ENCODE measurements at regions of chr19 and their contacts with region 1.

Region 1: GRCh38 chr19:10936661-10937084 is 8.1 kb downstream of the TIMM29 start:
- DNase-seq: peak; percentile 75 to 80
- H3K4me3 ChIP-seq: no peak overlapping the region
- H3K4me3 Mint-ChIP-seq: peak overlapping the region; percentile 49
- H3K27ac Mint-ChIP-seq: peak overlapping the region; percentile 57
- H3K4me1 ChIP-seq: peaks cover 28% of the 10 kb centered on the region
- H3K4me1 Mint-ChIP-seq: peaks cover 7% of the 10 kb centered on the region
- H3K27me3 ChIP-seq: no peaks in the 10 kb centered on the region
- H3K27me3 Mint-ChIP-seq: no peaks in the 10 kb centered on the region
- CTCF ChIP-seq: peak; percentile 71 to 76

Region 2: DNA sequence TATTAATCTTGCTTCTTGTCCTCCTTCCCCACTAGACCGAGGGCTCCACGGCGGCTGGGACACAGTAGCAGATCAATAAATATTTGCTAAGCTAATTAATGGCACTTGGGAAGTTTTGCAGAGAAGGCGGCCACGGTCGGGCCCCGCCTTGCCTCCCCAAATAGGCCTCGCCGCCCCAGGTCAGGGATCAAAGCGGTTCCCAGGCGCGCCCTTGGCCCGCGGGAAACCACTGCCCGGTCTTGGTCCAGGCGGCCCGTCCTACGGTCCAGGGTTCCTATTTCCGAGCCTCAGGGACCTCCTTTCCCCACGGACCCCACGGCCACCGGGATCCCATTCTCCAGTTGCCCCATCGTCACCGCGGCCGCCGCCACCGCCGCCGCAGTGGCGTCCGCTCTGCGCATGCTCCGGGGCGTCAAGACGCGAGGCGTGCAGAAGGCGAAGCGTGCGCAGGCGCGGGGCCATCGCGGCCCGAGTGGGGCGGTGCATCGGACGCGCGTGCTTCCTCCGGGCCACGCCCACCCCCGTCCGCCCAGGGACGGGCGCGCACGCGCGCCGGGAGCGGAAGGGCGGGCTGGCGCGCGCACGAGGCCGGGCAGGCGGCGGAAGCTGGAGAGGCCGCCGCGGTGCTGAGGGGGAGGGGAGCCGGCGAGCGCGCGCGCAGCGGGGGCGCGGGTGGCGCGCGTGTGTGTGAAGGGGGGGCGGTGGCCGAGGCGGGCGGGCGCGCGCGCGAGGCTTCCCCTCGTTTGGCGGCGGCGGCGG is 23.8 kb after region 1 on chr19 and contains the start of gene SMARCA4:
- CTCF ChIA-PET with region 1: interaction called, 8 read pairs
- POLR2A ChIA-PET with region 1: interaction called, 7 read pairs
- intact Hi-C with region 1: loop called (anchors 2 kb)
- DNase-seq: peak; percentile 94 to 98
- H3K4me3 ChIP-seq: peak within 1 kb of the TSS; percentile 96
- H3K4me3 Mint-ChIP-seq: peak within 1 kb of the TSS; percentile 83
- H3K27ac Mint-ChIP-seq: peak within 1 kb of the TSS; percentile 91
- H3K4me1 ChIP-seq: peaks cover 9% of the 10 kb centered on the region; the same call in 1 of the 2 replicates
- H3K4me1 Mint-ChIP-seq: peaks cover 7% of the 10 kb centered on the region
- H3K27me3 ChIP-seq: no peaks in the 10 kb centered on the region
- H3K27me3 Mint-ChIP-seq: no peaks in the 10 kb centered on the region
- CTCF ChIP-seq: no peak
- total RNA-seq, gene SMARCA4: 171 and 180 TPM in 2 replicates

Region 3: GRCh38 chr19:11035441-11036377 is 99.0 kb after region 1 on chr19:
- CTCF ChIA-PET with region 1: interaction called, 11 read pairs
- POLR2A ChIA-PET with region 1: no interaction called
- intact Hi-C with region 1: no loop called
- DNase-seq: peak; percentile 84 to 86
- H3K4me3 ChIP-seq: no peak overlapping the region
- H3K4me3 Mint-ChIP-seq: no peak overlapping the region
- H3K27ac Mint-ChIP-seq: no peak overlapping the region
- H3K4me1 ChIP-seq: no peaks in the 10 kb centered on the region
- H3K4me1 Mint-ChIP-seq: no peaks in the 10 kb centered on the region
- H3K27me3 ChIP-seq: no peaks in the 10 kb centered on the region
- H3K27me3 Mint-ChIP-seq: no peaks in the 10 kb centered on the region
- CTCF ChIP-seq: peak; percentile 83 to 94

Region 4: GRCh38 chr19:11137542-11138384 is 201.1 kb after region 1 on chr19:
- CTCF ChIA-PET with region 1: no interaction called
- POLR2A ChIA-PET with region 1: no interaction called
- intact Hi-C with region 1: loop called (anchors 5 kb)
- DNase-seq: peak; percentile 77 to 79
- H3K4me3 ChIP-seq: peak overlapping the region; percentile 50
- H3K4me3 Mint-ChIP-seq: peak overlapping the region; percentile 66
- H3K27ac Mint-ChIP-seq: peak overlapping the region; percentile 7
- H3K4me1 ChIP-seq: peaks cover 19% of the 10 kb centered on the region
- H3K4me1 Mint-ChIP-seq: no peaks in the 10 kb centered on the region
- H3K27me3 ChIP-seq: no peaks in the 10 kb centered on the region
- H3K27me3 Mint-ChIP-seq: no peaks in the 10 kb centered on the region
- CTCF ChIP-seq: peak; percentile 71 to 79

Measured in Caco-2 (cell line).